Activated CD8-positive, alpha-beta T cell treated with anti-CD3 and anti-CD28 coated beads, Interleukin-2, amount 10 ng/mL, durations not matched to agents 7 days and 5 days (primary cell): ENCODE measurements at regions of chr4 and their contacts with region 1.

Region 1: DNA sequence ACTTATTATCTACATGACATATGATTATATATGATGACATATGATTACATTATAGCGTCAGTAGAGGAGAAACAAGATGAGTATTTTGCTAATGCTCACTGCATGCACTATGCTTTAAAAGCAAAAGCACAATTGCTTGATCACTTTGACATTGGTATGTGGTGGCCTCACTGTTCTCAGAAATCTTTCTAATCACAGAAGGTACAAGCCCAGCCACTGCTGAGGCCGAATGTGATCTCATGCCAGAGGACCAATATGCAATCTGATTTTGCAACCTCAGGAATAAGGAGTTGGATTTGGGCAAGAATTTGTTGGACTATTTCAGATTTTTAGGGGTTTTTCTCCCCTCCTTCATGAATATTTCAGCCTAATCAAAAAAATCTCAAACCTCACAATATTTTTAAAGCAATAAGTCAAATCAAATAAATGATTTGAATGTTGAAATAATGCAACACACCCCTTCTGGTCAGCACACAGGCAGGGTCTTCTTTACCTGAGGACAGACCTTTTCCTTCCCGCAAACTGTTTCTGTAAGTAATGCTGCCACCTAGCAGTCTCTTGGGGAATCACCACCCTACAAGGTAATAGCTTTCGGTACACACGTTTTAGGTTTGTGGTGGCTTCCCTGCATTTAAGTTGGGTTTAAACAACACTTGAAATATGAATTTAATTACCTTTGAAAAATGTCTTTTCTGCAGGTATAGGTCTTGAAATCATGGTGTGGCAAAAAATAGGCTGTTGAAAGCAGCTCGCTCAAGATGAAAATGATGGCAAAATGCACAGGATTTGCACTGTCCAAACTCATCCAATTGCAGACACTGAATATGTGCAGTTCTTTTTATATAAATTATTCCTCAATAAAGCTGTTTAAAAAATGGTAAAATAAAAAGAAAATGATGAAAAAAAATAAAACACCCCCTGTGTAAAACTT is 4.8 kb upstream of the CXCL13 start:
- DNase-seq: peak; percentile 53
- ATAC-seq: peak; percentile 53
- H3K4me3 Mint-ChIP-seq: no peak overlapping the region
- H3K27ac Mint-ChIP-seq: no peak overlapping the region
- H3K4me1 Mint-ChIP-seq: peaks cover 1% of the 10 kb centered on the region
- H3K27me3 Mint-ChIP-seq: peaks cover 24% of the 10 kb centered on the region

Region 2: DNA sequence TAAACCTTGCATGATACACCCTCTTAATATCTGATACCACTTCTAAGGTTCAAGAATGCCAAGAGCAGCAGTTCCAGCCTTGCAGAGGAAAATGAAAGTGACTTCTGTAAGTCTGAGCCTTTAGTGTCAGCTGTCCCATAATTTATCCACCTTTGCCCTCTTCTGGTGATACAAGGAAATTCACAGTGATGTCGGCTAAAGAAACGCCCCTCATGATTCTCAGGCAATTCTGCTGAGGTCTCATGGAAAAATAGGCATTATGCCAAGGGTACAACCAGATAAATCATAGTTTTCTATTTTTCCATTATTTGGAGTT is 167.4 kb before region 1 on chr4:
- CTCF ChIA-PET with region 1: interaction called, 17 read pairs
- POLR2A ChIA-PET with region 1: no interaction called
- DNase-seq: peak; percentile 42
- ATAC-seq: peak; percentile 89
- H3K4me3 Mint-ChIP-seq: no peak overlapping the region
- H3K27ac Mint-ChIP-seq: no peak overlapping the region
- H3K4me1 Mint-ChIP-seq: peaks cover 4% of the 10 kb centered on the region
- H3K27me3 Mint-ChIP-seq: no peaks in the 10 kb centered on the region

Region 3: GRCh38 chr4:77473509-77473908 is 127.3 kb before region 1 on chr4:
- CTCF ChIA-PET with region 1: interaction called, 122 read pairs
- POLR2A ChIA-PET with region 1: interaction called, 4 read pairs
- DNase-seq: no peak
- ATAC-seq: no peak
- H3K4me3 Mint-ChIP-seq: no peak overlapping the region
- H3K27ac Mint-ChIP-seq: no peak overlapping the region
- H3K4me1 Mint-ChIP-seq: no peaks in the 10 kb centered on the region
- H3K27me3 Mint-ChIP-seq: peaks cover 25% of the 10 kb centered on the region

Region 4: GRCh38 chr4:77586951-77587383 is 13.8 kb before region 1 on chr4:
- CTCF ChIA-PET with region 1: interaction called, 25 read pairs
- POLR2A ChIA-PET with region 1: no interaction called
- DNase-seq: peak; percentile 69
- ATAC-seq: peak; percentile 97
- H3K4me3 Mint-ChIP-seq: peak overlapping the region; percentile 1
- H3K27ac Mint-ChIP-seq: no peak overlapping the region
- H3K4me1 Mint-ChIP-seq: peaks cover 30% of the 10 kb centered on the region
- H3K27me3 Mint-ChIP-seq: no peaks in the 10 kb centered on the region

Region 5: DNA sequence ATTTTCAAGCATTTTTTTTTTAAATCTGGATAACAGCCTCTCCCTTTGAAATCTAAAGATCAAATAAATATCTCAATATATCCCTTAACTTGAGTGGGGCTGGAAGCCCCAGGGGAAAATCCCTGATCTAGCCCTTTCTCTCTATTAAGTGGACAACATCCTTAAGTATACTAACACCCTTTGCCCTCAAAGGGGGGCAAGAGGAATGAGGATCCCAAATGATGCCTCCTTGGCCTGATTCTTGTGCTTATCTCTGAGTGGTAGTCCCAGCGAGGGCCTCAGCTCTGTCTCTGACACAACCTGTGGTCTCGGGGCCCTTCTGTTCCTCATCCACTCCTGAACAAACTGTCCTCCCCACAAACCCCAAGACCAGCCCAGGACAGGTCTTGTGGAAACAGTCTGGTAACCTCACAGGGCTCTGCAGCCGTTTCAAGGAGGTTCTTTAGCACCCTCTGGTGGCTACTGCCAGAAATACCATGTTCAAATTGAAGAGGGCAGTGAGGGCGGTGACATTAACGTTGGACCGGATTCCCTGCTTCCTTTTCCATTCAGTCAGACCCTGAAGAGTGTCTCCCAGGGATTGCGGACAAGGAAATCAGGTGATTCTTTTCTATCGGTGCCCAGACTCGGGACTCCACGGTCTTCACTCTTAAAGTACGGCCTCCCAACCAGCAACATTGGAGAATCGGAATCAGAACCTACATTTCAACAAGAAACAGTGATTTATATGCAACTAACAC is 17.8 kb after region 1 on chr4:
- CTCF ChIA-PET with region 1: interaction called, 44 read pairs
- POLR2A ChIA-PET with region 1: no interaction called
- DNase-seq: peak; percentile 79
- ATAC-seq: peak; percentile 93
- H3K4me3 Mint-ChIP-seq: no peak overlapping the region
- H3K27ac Mint-ChIP-seq: no peak overlapping the region
- H3K4me1 Mint-ChIP-seq: peaks cover 9% of the 10 kb centered on the region
- H3K27me3 Mint-ChIP-seq: peaks cover 17% of the 10 kb centered on the region